ENCODE measurements at regions of chr18 and their contacts with region 1.

Region 1: GRCh38 chr18:32470713-32471633 is at the start of gene GAREM1:
- ATAC-seq: peak; percentile 88 to 94 (median 91)
- H3K4me3 ChIP-seq: peak within 1 kb of the TSS; percentile 45 to 73 (median 58)
- H3K27ac ChIP-seq: peak within 1 kb of the TSS; percentile 79 to 84
- H3K4me1 ChIP-seq: peaks cover 2 to 3% of the 10 kb centered on the region in 2 donors
- total RNA-seq, gene GAREM1: 1.3 to 17.7 (median 3.6) TPM

Region 2: DNA sequence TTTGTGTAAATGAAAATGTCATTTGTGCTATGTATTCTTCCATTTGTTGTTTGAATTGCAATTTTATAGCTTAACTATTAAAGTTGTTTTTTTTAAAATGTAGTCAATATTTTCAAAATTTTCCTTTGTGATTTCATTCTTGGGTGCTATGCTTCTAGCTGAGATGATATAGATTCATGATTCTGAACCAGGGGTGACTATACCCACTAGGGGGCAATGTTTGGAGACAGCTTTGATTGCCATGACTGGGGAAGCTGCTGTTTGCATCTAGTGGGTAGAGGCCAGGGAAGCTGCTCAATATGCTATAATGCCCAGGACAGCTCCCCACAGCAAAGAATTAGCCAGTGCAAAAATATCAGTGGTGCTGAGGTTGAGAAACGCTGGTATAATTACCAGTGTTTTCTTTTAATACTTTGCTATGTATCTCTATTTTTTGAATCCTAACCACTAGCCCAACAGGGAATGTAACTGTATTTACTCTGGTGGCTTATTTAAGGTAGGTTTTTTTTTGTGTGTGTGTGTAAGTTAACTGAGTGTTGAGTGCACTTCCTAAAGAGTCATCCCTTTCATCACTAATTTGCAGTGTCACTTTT is 181.4 kb before region 1 on chr18:
- in situ Hi-C with region 1: loop called in 1 of 9 experiments (anchors 25 kb)
- ATAC-seq: peak; percentile 36 to 88 (median 75)
- H3K4me3 ChIP-seq: no peak overlapping the region
- H3K27ac ChIP-seq: no peak overlapping the region
- H3K4me1 ChIP-seq: no peaks in the 10 kb centered on the region